ENCODE measurements at regions of chr20 and their contacts with region 1.

Region 1: DNA sequence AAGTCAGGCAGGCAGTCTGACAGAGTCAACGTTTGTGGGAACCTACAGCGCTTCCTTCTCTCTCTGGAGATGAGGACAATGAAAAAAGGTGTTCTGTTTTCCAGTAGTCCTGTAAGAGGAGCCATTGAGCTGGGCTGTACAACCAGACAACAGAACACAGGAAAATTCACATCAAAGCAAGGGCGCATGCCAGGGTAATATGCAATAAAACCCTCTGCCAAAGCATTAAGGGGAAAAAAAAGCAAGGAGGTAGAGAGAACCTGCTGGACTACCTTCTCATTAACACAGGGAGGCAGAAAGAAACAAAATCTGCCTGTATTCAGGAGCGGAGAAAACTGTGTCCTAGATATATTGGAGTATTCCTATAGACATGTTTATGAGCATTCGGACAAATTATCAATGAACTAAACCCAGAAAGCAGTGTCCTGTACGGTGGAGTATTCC is 1.3 kb downstream of the RNF24 start:
- DNase-seq: peak in 7 of 9 donors; percentile 18 to 54 (median 35)
- ATAC-seq: no peak
- H3K4me3 ChIP-seq: no peak overlapping the region
- H3K4me3 Mint-ChIP-seq: peak overlapping the region; percentile 72 to 95 (median 89)
- H3K27ac ChIP-seq: no peak overlapping the region
- H3K27ac Mint-ChIP-seq: peak overlapping the region; percentile 28 to 97 (median 78)
- H3K4me1 ChIP-seq: peaks cover 8 to 9% of the 10 kb centered on the region in 2 donors
- H3K4me1 Mint-ChIP-seq: peaks cover 26 to 52% (median 35%) of the 10 kb centered on the region in 7 donors
- H3K27me3 ChIP-seq: no peaks in the 10 kb centered on the region
- H3K27me3 Mint-ChIP-seq: no peaks in the 10 kb centered on the region

Region 2: DNA sequence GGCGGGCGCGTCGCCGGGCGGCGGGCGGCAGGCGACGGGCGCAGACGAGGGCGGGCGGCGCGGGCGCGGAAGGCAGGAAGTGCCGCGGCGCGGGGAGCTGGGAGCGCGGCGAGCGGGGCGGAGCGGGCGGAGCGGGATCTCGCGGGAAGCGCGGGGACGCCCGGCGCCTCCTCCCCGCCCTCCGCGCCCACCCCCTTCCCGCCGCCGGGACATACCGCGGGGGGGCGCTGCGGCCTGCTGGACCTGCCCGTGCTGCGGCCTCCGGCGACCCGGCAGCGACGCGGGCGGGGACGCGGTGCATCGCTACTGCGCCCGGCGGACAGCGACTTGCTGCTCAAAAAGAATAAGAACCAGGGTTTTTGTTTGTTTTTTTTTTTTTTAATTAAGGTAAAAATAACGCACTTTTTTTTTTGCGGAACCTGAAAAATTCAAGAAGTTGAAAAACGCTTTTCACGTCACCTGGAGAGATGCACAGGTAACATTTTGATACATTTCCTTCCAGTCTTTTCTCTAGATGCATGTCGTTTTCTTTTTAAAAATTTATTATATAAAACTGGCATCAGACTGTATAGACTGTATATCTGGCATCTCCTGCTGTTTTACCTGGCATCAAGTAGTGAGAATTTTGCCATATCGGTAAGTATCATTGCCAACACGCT is 227.3 kb before region 1 on chr20 and contains the start of gene CENPB:
- CTCF ChIA-PET with region 1: interaction called, 7 read pairs
- POLR2A ChIA-PET with region 1: interaction called, 3 read pairs
- intact Hi-C with region 1: loop called in 1 of 2 experiments (anchors 1 kb)
- DNase-seq: peak; percentile 74 to 98 (median 88)
- ATAC-seq: peak; percentile 96
- H3K4me3 ChIP-seq: peak within 1 kb of the TSS; percentile 29
- H3K4me3 Mint-ChIP-seq: peak within 1 kb of the TSS; percentile 76 to 87 (median 83)
- H3K27ac ChIP-seq: peak within 1 kb of the TSS; percentile 62
- H3K27ac Mint-ChIP-seq: peak within 1 kb of the TSS; percentile 51 to 90 (median 76)
- H3K4me1 ChIP-seq: peaks cover 7 to 9% of the 10 kb centered on the region in 2 donors
- H3K4me1 Mint-ChIP-seq: peaks cover 30 to 45% (median 41%) of the 10 kb centered on the region in 7 donors
- H3K27me3 ChIP-seq: no peaks in the 10 kb centered on the region
- H3K27me3 Mint-ChIP-seq: peaks cover 0 to 12% (median 0%) of the 10 kb centered on the region in 5 donors
- total RNA-seq, gene CENPB: 35.3 to 73.6 (median 50.0) TPM

Region 3: GRCh38 chr20:3846740-3847428 is 167.2 kb before region 1 on chr20 and contains the start of gene MAVS:
- CTCF ChIA-PET with region 1: no interaction called
- POLR2A ChIA-PET with region 1: no interaction called
- intact Hi-C with region 1: loop called in 1 of 2 experiments (anchors 1 kb)
- DNase-seq: peak; percentile 76 to 93 (median 82)
- ATAC-seq: peak; percentile 100
- H3K4me3 ChIP-seq: peak within 1 kb of the TSS; percentile 86
- H3K4me3 Mint-ChIP-seq: peak within 1 kb of the TSS; percentile 85 to 93 (median 90)
- H3K27ac ChIP-seq: peak within 1 kb of the TSS; percentile 96
- H3K27ac Mint-ChIP-seq: peak within 1 kb of the TSS; percentile 59 to 95 (median 90)
- H3K4me1 ChIP-seq: peaks cover 0 to 10% of the 10 kb centered on the region in 2 donors
- H3K4me1 Mint-ChIP-seq: peaks cover 16 to 30% (median 27%) of the 10 kb centered on the region in 7 donors
- H3K27me3 ChIP-seq: no peaks in the 10 kb centered on the region
- H3K27me3 Mint-ChIP-seq: no peaks in the 10 kb centered on the region
- total RNA-seq, gene MAVS: 23.3 to 49.9 (median 41.5) TPM

Region 4: DNA sequence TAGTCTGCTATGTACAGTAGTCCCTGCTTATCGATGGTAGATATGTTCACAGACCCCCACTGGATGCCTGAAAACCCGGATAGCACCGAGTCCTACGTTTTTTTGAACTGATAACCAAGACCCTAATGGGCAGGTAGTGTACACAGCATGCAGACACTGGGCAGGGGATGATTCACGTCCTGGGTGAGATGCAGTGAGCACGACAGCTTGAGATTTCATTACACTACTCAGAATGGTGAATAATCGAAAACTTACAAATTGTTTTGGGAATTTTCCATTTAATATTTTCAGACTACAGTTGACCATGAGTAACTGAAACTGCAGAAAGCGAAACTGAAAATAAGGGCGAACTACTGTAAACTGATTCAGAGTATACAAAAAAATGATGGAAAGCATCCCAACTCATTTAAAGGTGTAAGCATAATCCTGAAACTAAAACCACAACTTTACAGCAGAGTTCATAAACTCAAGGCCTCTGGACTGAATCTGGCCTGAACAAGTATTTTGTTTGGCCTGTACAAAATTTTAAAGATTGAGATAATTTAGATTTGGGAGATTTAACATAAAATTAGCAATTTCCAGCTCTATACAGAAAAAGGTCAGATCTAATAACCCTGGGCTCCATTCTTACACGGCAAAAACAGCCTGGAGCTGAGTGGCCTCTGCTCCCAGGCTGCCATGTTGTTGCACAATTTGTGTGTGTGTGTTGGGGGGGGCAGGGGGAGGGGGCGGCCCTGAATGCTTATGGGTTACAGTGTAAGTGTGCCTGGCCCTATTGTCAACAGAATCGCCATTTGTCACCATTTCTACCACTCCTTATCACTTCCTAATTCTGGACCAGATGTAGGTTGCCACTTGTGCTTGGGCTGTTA is 33.6 kb before region 1 on chr20:
- CTCF ChIA-PET with region 1: no interaction called
- POLR2A ChIA-PET with region 1: no interaction called
- intact Hi-C with region 1: loop called in 1 of 2 experiments (anchors 5 kb)
- DNase-seq: peak in 5 of 9 donors; percentile 5 to 37 (median 16)
- ATAC-seq: peak; percentile 60
- H3K4me3 ChIP-seq: peak overlapping the region; percentile 21
- H3K4me3 Mint-ChIP-seq: peak overlapping the region; percentile 75 to 88 (median 84)
- H3K27ac ChIP-seq: peak overlapping the region; percentile 62
- H3K27ac Mint-ChIP-seq: peak overlapping the region; percentile 81 to 96 (median 90)
- H3K4me1 ChIP-seq: peaks cover 5 to 12% of the 10 kb centered on the region in 2 donors
- H3K4me1 Mint-ChIP-seq: peaks cover 10 to 33% (median 25%) of the 10 kb centered on the region in 7 donors
- H3K27me3 ChIP-seq: no peaks in the 10 kb centered on the region
- H3K27me3 Mint-ChIP-seq: no peaks in the 10 kb centered on the region

Region 5: DNA sequence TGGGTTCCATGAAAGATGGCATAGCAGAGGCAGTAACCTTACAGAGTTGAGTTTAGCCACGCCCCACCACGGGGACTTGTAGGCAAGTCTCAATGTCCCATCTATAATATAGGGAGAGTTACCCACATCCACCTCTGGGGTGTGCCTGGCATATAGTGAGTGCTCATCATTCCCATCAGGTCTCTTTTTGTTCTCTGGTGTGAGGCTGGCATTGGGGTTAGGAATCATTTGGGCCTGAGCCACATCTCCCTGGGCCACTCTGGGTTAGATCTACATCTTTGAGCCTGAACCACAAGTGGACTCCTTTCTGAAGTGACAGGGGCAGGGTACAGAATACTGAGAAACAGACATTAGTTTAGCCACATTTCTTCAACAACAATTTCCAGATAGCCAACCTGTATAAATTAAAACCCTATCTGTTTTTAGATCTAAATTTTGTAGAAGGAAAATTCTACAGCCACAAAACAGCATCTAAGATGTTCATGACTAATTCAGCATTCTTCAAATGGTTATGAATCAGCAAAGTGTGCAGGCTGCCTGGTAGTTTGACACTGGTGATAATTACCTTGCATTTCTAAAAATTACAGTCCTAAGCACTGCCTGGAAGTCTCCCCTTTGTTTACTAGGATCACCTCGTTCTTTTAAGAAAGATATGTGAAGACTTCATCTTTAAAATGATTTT is 18.8 kb before region 1 on chr20:
- CTCF ChIA-PET with region 1: interaction called, 3 read pairs
- POLR2A ChIA-PET with region 1: interaction called, 4 read pairs
- intact Hi-C with region 1: loop called in 1 of 2 experiments (anchors 2 kb)
- DNase-seq: peak in 1 of 9 donors; percentile 29
- ATAC-seq: peak; percentile 61
- H3K4me3 ChIP-seq: no peak overlapping the region
- H3K4me3 Mint-ChIP-seq: peak overlapping the region in 2 of 10 donors; percentile 1 to 48
- H3K27ac ChIP-seq: no peak overlapping the region
- H3K27ac Mint-ChIP-seq: peak overlapping the region in 7 of 9 donors; percentile 6 to 76 (median 34)
- H3K4me1 ChIP-seq: peaks cover 5 to 27% of the 10 kb centered on the region in 2 donors
- H3K4me1 Mint-ChIP-seq: peaks cover 19 to 64% (median 52%) of the 10 kb centered on the region in 7 donors
- H3K27me3 ChIP-seq: no peaks in the 10 kb centered on the region
- H3K27me3 Mint-ChIP-seq: no peaks in the 10 kb centered on the region

Region 6: DNA sequence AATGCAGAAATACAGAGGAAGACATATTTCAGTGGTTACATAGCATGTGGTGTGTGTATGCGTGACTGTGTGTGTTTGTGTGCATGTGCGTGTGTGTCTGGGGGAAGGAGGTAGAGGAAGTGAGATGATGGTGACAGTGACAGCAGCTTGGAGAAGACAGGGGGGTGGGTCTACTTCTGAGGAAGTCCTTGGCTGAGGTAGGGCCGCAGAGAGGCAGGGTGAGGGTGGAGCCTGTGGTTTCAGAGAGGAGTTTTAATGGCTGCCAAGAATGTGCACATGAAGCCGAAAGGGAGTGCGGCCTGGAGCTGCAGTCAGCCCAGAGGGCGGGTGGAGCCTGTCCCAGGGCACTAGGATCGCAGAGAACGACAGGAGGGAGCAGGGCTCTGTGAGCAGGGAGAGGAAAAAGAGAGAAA is 24.0 kb after region 1 on chr20:
- CTCF ChIA-PET with region 1: no interaction called
- POLR2A ChIA-PET with region 1: interaction called, 3 read pairs
- intact Hi-C with region 1: loop called (anchors 1 kb)
- DNase-seq: peak; percentile 51 to 93 (median 89)
- ATAC-seq: peak; percentile 100
- H3K4me3 ChIP-seq: peak overlapping the region; percentile 34
- H3K4me3 Mint-ChIP-seq: peak overlapping the region; percentile 72 to 92 (median 84)
- H3K27ac ChIP-seq: peak overlapping the region; percentile 57
- H3K27ac Mint-ChIP-seq: peak overlapping the region; percentile 92 to 99 (median 95)
- H3K4me1 ChIP-seq: peaks cover 16 to 18% of the 10 kb centered on the region in 2 donors
- H3K4me1 Mint-ChIP-seq: peaks cover 10 to 27% (median 19%) of the 10 kb centered on the region in 7 donors
- H3K27me3 ChIP-seq: no peaks in the 10 kb centered on the region
- H3K27me3 Mint-ChIP-seq: no peaks in the 10 kb centered on the region

Region 7: GRCh38 chr20:4091490-4092479 is 77.7 kb after region 1 on chr20:
- CTCF ChIA-PET with region 1: interaction called, 4 read pairs
- POLR2A ChIA-PET with region 1: no interaction called
- intact Hi-C with region 1: loop called in 1 of 2 experiments (anchors 2 kb)
- DNase-seq: peak in 6 of 9 donors; percentile 6 to 62 (median 18)
- ATAC-seq: peak; percentile 51
- H3K4me3 ChIP-seq: no peak overlapping the region
- H3K4me3 Mint-ChIP-seq: no peak overlapping the region
- H3K27ac ChIP-seq: no peak overlapping the region
- H3K27ac Mint-ChIP-seq: peak overlapping the region in 1 of 9 donors; percentile 37
- H3K4me1 ChIP-seq: no peaks in the 10 kb centered on the region
- H3K4me1 Mint-ChIP-seq: peaks cover 0 to 5% (median 0%) of the 10 kb centered on the region in 7 donors
- H3K27me3 ChIP-seq: no peaks in the 10 kb centered on the region
- H3K27me3 Mint-ChIP-seq: peaks cover 9 to 23% (median 11%) of the 10 kb centered on the region in 5 donors